Posterior cingulate gyrus (tissue), 11 donors: ENCODE measurements at regions of chr6 and their contacts with region 1.

Region 1: DNA sequence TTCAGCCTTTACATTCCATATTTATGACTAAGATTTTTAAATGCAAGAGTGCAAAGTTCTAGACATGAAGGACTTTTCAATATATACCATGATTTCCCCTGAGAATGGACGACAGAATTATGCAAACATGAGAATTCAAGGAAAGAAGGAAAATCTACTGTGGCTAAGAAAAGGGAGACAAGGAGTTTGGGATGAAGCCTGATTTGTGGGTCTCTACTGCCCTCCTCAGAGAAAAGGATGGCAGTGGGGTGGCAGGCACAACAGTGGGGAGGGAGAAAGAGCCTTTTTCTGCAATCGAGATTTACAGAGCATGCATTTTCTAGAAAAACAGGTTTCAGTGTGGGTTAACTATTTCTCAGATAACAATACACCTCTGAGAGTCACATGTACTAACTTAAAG is 466.9 kb upstream of the NRSN1 start:
- DNase-seq: peak in 7 of 10 donors; percentile 23 to 81 (median 58)

Region 2: DNA sequence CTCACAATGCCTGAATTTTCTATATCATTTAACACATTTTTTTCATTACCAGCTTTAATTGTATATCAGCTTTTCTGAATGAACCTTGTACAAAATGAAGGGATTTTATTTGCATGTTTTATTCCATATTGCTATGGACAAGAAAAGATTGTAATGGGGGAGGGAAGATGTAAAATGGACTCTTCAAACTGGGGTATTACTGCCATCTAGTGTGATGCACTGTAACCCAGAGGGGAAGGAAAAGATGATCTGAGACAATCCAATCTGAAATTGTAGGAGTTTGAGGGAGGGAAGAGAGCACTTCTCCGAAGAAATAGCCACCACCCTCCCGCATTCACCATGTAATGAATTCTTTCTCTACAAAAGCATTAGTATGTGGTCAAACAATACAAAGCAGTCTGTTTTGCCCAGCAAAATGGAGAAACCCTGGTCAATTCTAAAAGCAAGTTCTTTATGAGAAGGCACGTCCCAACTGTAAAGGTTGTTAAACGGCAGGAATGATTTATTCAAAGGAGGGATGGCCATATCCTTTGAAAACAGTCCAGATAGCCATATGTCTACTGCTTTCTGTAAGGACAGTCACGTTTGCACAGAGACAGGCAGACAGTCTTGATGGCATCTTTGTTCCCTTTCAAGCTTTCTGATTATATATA is 212.6 kb before region 1 on chr6:
- intact Hi-C with region 1: loop called (anchors 10 kb)
- DNase-seq: no peak

Region 3: DNA sequence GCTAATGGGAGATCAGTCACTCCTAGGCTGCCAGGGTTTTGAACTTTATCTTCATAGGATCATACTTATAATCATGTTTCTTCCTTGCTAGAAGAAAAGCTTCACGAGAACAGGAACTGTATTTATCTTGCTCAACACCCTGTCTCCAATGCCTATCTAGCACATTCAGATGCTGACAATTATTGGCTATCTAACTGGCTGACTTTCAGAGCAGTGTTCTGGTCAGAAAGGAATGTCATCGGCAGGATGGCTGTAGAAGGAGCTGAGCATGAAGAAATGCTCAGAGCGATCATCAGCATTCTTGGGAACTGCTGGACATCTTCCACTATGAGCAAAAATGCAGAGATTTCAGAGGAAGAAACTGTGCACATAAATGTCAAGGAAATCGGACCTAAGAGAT is 161.1 kb before region 1 on chr6:
- intact Hi-C with region 1: no loop called
- DNase-seq: no peak

Region 4: GRCh38 chr6:23547701-23548161 is 111.4 kb before region 1 on chr6:
- intact Hi-C with region 1: loop called (anchors 10 kb)
- DNase-seq: no peak

Region 5: GRCh38 chr6:23611778-23612381 is 47.2 kb before region 1 on chr6:
- intact Hi-C with region 1: no loop called
- DNase-seq: peak in 1 of 10 donors; percentile 11